BJ (cell line): ENCODE measurements at regions of chr11 and their contacts with region 1.

Region 1: DNA sequence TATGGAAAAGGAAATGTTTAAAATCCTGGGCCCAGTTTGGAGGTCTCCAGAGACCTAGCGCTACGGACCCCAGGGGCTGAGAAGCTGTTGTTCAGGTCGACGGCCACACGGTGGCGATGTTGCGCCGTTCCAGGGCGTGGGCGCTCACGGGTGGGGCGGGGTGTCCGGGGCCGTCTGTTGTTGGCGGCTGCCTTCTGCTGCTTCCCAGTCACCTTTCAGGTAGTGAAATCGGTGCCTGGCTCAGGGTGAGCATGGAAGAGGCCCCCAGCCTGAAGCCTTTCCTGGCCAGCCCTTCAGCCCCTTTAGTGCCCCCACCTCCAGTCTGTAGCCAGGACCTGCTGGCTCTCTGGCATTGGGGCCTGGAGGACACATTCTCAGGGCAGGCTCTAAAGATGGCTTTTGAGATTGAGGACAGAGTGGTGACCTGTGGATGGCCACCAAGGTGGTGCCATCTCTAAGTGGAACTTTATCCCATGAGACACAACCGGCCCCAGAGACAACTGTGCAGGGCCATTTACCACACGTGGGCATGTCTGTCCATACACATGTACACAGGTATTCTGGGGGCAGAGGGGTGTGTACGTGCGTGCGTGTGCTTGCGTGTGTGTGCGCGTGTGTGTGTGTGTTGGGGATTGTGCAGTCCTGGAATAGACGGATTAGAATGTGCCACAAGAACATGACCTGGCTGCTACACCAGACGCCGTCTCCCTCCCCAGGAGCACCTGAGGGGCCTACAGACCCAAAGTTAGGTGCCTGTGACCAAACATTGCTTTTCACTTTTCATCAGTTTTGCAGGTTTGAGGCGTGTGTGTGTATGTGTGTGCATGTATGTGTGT is 53.8 kb downstream of the ST14 start:
- DNase-seq: no peak
- H3K4me3 ChIP-seq: no peak overlapping the region
- H3K27me3 ChIP-seq: peaks cover 38% of the 10 kb centered on the region
- CTCF ChIP-seq: peak; percentile 97

Region 2: GRCh38 chr11:130223291-130223971 is 10.1 kb after region 1 on chr11:
- CTCF ChIA-PET with region 1: interaction called, 23 read pairs
- POLR2A ChIA-PET with region 1: no interaction called
- DNase-seq: no peak
- H3K4me3 ChIP-seq: no peak overlapping the region
- H3K27me3 ChIP-seq: no peaks in the 10 kb centered on the region
- CTCF ChIP-seq: no peak